ENCODE measurements at regions of chr3 and their contacts with region 1.

Region 1: GRCh38 chr3:12719984-12720898 is 38.8 kb downstream of the TMEM40 start:
- DNase-seq: peak; percentile 85 to 86
- ATAC-seq: peak; percentile 94 to 96
- H3K4me3 ChIP-seq: peak overlapping the region; percentile 36; the same call in 2 of the 3 replicates
- H3K27ac ChIP-seq: no peak overlapping the region
- H3K4me1 ChIP-seq: 0 out of 3 replicates have a peak, but pooled peaks cover 4% of the 10 kb centered on the region
- CTCF ChIP-seq: peak; percentile 91
- EP300 ChIP-seq: no peak
- POLR2A ChIP-seq: no peak
- RAD21 ChIP-seq: peak; percentile 76 to 78

Region 2: DNA sequence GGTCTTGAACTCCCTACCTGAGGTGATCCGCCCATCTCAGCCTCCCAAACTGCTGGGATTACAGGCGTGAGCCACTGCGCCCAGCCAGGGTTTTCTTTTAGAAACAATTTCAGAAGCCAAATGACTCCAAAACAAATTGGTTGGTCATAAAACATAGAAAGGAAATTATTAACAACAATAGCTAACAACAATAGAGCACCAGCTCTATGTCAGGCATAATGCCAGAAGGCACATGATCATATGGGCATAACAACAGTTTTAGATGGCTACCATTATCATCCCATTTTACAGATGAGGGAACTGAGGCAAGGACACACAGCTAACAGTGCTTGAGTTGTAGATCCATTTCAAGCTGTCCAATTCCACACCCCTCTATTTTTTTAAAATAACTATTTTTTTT is 34.1 kb before region 1 on chr3:
- CTCF ChIA-PET with region 1: interaction called, 11 read pairs
- POLR2A ChIA-PET with region 1: no interaction called
- DNase-seq: no peak
- ATAC-seq: no peak
- H3K4me3 ChIP-seq: no peak overlapping the region
- H3K27ac ChIP-seq: no peak overlapping the region
- H3K4me1 ChIP-seq: peaks cover 6% of the 10 kb centered on the region; the same call in 1 of the 3 replicates
- CTCF ChIP-seq: no peak
- EP300 ChIP-seq: no peak
- POLR2A ChIP-seq: no peak
- RAD21 ChIP-seq: no peak

Region 3: GRCh38 chr3:12695112-12695511 is 25.1 kb before region 1 on chr3:
- CTCF ChIA-PET with region 1: interaction called, 15 read pairs
- POLR2A ChIA-PET with region 1: no interaction called
- DNase-seq: no peak
- ATAC-seq: no peak
- H3K4me3 ChIP-seq: no peak overlapping the region
- H3K27ac ChIP-seq: 0 out of 6 replicates have a peak overlapping the region, but pooled peaks of 1 of the 2 experiments have one; percentile 27
- H3K4me1 ChIP-seq: peaks cover 17% of the 10 kb centered on the region; the same call in 2 of the 3 replicates
- CTCF ChIP-seq: no peak
- EP300 ChIP-seq: no peak
- POLR2A ChIP-seq: no peak
- RAD21 ChIP-seq: no peak

Region 4: DNA sequence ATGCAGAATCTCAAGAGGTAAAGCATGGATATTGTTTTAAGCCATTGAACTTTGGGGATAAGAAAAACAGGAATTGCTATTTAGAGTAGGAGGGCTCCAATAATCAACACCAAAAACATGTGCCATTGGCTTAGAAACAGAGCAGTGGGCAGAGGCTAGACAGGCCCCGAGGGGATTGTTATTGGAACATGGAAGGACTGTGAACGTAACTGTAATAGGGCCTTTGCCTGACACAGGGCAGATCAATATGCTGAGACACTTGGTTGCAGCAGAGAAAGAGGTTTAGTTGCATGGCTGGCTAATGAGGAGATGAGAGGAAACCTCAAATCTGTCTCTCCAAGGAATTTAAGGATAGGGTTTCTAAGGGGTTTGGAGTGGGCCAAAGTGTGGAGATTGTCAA is 19.4 kb before region 1 on chr3:
- CTCF ChIA-PET with region 1: interaction called, 44 read pairs
- POLR2A ChIA-PET with region 1: no interaction called
- DNase-seq: no peak
- ATAC-seq: no peak
- H3K4me3 ChIP-seq: no peak overlapping the region
- H3K27ac ChIP-seq: no peak overlapping the region
- H3K4me1 ChIP-seq: peaks cover 14% of the 10 kb centered on the region
- CTCF ChIP-seq: no peak
- EP300 ChIP-seq: no peak
- POLR2A ChIP-seq: no peak
- RAD21 ChIP-seq: no peak

Region 5: GRCh38 chr3:12706504-12707253 is 13.6 kb before region 1 on chr3:
- CTCF ChIA-PET with region 1: interaction called, 44 read pairs
- POLR2A ChIA-PET with region 1: no interaction called
- DNase-seq: peak; percentile 59 to 83
- ATAC-seq: peak; percentile 89 to 96
- H3K4me3 ChIP-seq: no peak overlapping the region
- H3K27ac ChIP-seq: no peak overlapping the region
- H3K4me1 ChIP-seq: peaks cover 9% of the 10 kb centered on the region
- CTCF ChIP-seq: peak; percentile 57
- EP300 ChIP-seq: no peak
- POLR2A ChIP-seq: no peak
- RAD21 ChIP-seq: peak; percentile 38 to 69; a peak in 4 of 5 replicates

Measured in A549 (cell line).